Gastrocnemius medialis (tissue), 4 donors: ENCODE measurements at regions of chr15 and their contacts with region 1.

Region 1: DNA sequence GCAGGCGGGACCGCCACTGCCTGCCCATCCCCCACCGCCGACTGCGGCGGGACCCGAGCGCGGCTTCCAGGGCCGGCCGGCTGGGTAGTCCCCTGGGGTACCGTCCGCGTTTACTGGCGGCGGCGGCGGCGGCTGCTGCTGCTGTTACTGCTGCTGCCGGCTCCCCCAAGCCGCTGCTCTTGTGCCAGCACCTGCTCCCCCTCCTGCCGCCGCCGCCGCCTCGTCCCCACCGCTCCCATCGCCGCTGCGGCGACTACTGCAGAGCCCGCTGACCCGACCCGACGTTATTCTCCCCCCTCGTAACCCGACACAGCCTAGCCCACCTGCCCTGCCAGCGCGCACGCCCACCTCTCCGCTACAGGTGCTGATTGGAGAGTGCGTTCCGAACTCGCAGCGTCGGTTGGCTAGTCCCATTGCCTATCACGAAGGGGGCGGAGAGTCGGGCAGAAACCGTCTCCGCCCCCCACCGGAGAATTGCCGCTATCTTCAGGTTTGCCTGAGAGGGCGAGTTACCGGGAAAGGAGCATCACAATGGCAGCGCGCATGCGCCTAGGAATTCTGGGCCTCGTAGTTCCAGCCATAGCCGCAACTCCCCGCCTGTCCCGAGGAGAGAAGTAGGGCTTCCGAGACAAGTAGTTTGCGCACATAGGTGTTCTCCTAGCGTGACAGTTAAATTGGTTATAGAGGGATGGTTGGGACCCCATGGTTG is at the start of gene TTBK2:
- DNase-seq: peak; percentile 98 to 99
- ATAC-seq: peak; percentile 98 to 99
- H3K4me3 ChIP-seq: peak within 1 kb of the TSS; percentile 88 to 100 (median 90)
- H3K27ac ChIP-seq: peak within 1 kb of the TSS; percentile 88 to 94 (median 91)
- H3K4me1 ChIP-seq: peaks cover 18 to 23% of the 10 kb centered on the region in 2 donors
- H3K27me3 ChIP-seq: no peaks in the 10 kb centered on the region
- CTCF ChIP-seq: peak in 2 of 5 experiments; percentile 14 to 39
- POLR2A ChIP-seq: peak; percentile 98 to 99
- total RNA-seq, gene TTBK2: 8.8 to 20.3 (median 16.2) TPM

Region 2: GRCh38 chr15:42575188-42576039 is 345.3 kb before region 1 on chr15 and contains the start of gene STARD9:
- in situ Hi-C with region 1: no loop called
- intact Hi-C with region 1: loop called (anchors 10 kb)
- DNase-seq: peak; percentile 96 to 98
- ATAC-seq: peak; percentile 95 to 96
- H3K4me3 ChIP-seq: peak within 1 kb of the TSS; percentile 85 to 97 (median 91)
- H3K27ac ChIP-seq: peak within 1 kb of the TSS; percentile 85 to 93 (median 87)
- H3K4me1 ChIP-seq: peaks cover 14 to 15% of the 10 kb centered on the region in 2 donors
- H3K27me3 ChIP-seq: peaks cover 0 to 5% (median 0%) of the 10 kb centered on the region in 3 donors
- CTCF ChIP-seq: peak in 1 of 5 experiments; percentile 10
- POLR2A ChIP-seq: peak; percentile 56 to 87
- total RNA-seq, gene STARD9: 1.6 to 3.5 (median 2.0) TPM

Region 3: GRCh38 chr15:42704492-42704926 is 216.2 kb before region 1 on chr15:
- in situ Hi-C with region 1: loop called in 3 of 4 experiments (anchors 5 to 10 kb)
- intact Hi-C with region 1: no loop called
- DNase-seq: peak; percentile 25 to 55
- ATAC-seq: peak; percentile 89 to 98
- H3K4me3 ChIP-seq: no peak overlapping the region
- H3K27ac ChIP-seq: no peak overlapping the region
- H3K4me1 ChIP-seq: no peaks in the 10 kb centered on the region
- H3K27me3 ChIP-seq: no peaks in the 10 kb centered on the region
- CTCF ChIP-seq: peak; percentile 50 to 87 (median 73)
- POLR2A ChIP-seq: no peak

Region 4: GRCh38 chr15:42736793-42737528 is 183.7 kb before region 1 on chr15 and contains the start of gene CDAN1:
- in situ Hi-C with region 1: no loop called
- intact Hi-C with region 1: loop called (anchors 2 kb)
- DNase-seq: peak; percentile 83 to 89
- ATAC-seq: peak; percentile 94
- H3K4me3 ChIP-seq: peak within 1 kb of the TSS; percentile 61 to 90 (median 72)
- H3K27ac ChIP-seq: peak within 1 kb of the TSS; percentile 85 to 96 (median 93)
- H3K4me1 ChIP-seq: peaks cover 13 to 16% of the 10 kb centered on the region in 2 donors
- H3K27me3 ChIP-seq: no peaks in the 10 kb centered on the region
- CTCF ChIP-seq: peak in 1 of 5 experiments; percentile 20
- POLR2A ChIP-seq: peak; percentile 74 to 75
- total RNA-seq, gene CDAN1: 4.2 to 5.9 (median 5.1) TPM

Region 5: GRCh38 chr15:43185157-43186017 is 264.7 kb after region 1 on chr15 and contains the start of gene CCNDBP1:
- in situ Hi-C with region 1: no loop called
- intact Hi-C with region 1: loop called (anchors 10 kb)
- DNase-seq: peak; percentile 94 to 97
- ATAC-seq: peak; percentile 89 to 92
- H3K4me3 ChIP-seq: peak within 1 kb of the TSS; percentile 70 to 89 (median 80)
- H3K27ac ChIP-seq: peak within 1 kb of the TSS; percentile 87 to 95 (median 95)
- H3K4me1 ChIP-seq: peaks cover 46 to 55% of the 10 kb centered on the region in 2 donors
- H3K27me3 ChIP-seq: no peaks in the 10 kb centered on the region
- CTCF ChIP-seq: peak in 2 of 5 experiments; percentile 38 to 42
- POLR2A ChIP-seq: peak; percentile 80 to 88
- total RNA-seq, gene CCNDBP1: 32.4 to 108 (median 92.6) TPM